Dorsolateral prefrontal cortex (tissue), 120 donors: ENCODE measurements at regions of chr22 and their contacts with region 1.

Region 1: GRCh38 chr22:36144886-36145541 is 15.5 kb downstream of the APOL3 start:
- DNase-seq: peak in 8 of 10 donors; percentile 30 to 76 (median 67)
- H3K4me3 ChIP-seq: peak overlapping the region in 1 of 59 donors; percentile 31
- H3K27ac ChIP-seq: peak overlapping the region in 1 of 59 donors; percentile 21
- H3K27me3 ChIP-seq: no peaks in the 10 kb centered on the region
- CTCF ChIP-seq: peak; percentile 63 to 93 (median 85)

Region 2: GRCh38 chr22:36017651-36018091 is 127.3 kb before region 1 on chr22:
- intact Hi-C with region 1: no loop called
- DNase-seq: no peak
- H3K4me3 ChIP-seq: no peak overlapping the region
- H3K27ac ChIP-seq: no peak overlapping the region
- H3K27me3 ChIP-seq: no peaks in the 10 kb centered on the region
- CTCF ChIP-seq: no peak

Region 3: GRCh38 chr22:36065775-36066559 is 79.0 kb before region 1 on chr22:
- intact Hi-C with region 1: no loop called
- DNase-seq: peak; percentile 80 to 89 (median 86)
- H3K4me3 ChIP-seq: peak overlapping the region; percentile 44 to 89 (median 62)
- H3K27ac ChIP-seq: peak overlapping the region; percentile 7 to 94 (median 83)
- H3K27me3 ChIP-seq: no peaks in the 10 kb centered on the region
- CTCF ChIP-seq: peak; percentile 94 to 100 (median 99)

Region 4: GRCh38 chr22:36117053-36117554 is 27.9 kb before region 1 on chr22:
- intact Hi-C with region 1: no loop called
- DNase-seq: peak in 2 of 10 donors; percentile 23 to 53
- H3K4me3 ChIP-seq: no peak overlapping the region
- H3K27ac ChIP-seq: no peak overlapping the region
- H3K27me3 ChIP-seq: no peaks in the 10 kb centered on the region
- CTCF ChIP-seq: no peak

Region 5: GRCh38 chr22:36180038-36180880 is 35.2 kb after region 1 on chr22:
- intact Hi-C with region 1: loop called (anchors 2 to 5 kb)
- DNase-seq: peak in 9 of 10 donors; percentile 62 to 82 (median 74)
- H3K4me3 ChIP-seq: no peak overlapping the region
- H3K27ac ChIP-seq: no peak overlapping the region
- H3K27me3 ChIP-seq: no peaks in the 10 kb centered on the region
- CTCF ChIP-seq: peak; percentile 66 to 95 (median 85)

Region 6: GRCh38 chr22:36286471-36287224 is 141.6 kb after region 1 on chr22:
- intact Hi-C with region 1: loop called (anchors 5 to 10 kb)
- DNase-seq: peak; percentile 67 to 88 (median 81)
- H3K4me3 ChIP-seq: no peak overlapping the region
- H3K27ac ChIP-seq: peak overlapping the region in 45 of 59 donors; percentile 13 to 84 (median 63)
- H3K27me3 ChIP-seq: no peaks in the 10 kb centered on the region
- CTCF ChIP-seq: peak; percentile 85 to 99 (median 96)

Region 7: GRCh38 chr22:36365020-36365411 is 220.0 kb after region 1 on chr22:
- intact Hi-C with region 1: no loop called
- DNase-seq: no peak
- H3K4me3 ChIP-seq: no peak overlapping the region
- H3K27ac ChIP-seq: peak overlapping the region in 44 of 59 donors; percentile 4 to 83 (median 52)
- H3K27me3 ChIP-seq: no peaks in the 10 kb centered on the region
- CTCF ChIP-seq: no peak